Motor neuron (in vitro differentiated cells): ENCODE measurements at regions of chr2 and their contacts with region 1.

Region 1: GRCh38 chr2:162490052-162490717 is 146.3 kb downstream of the GCA start:
- ATAC-seq: peak in 3 of 8 experiments; percentile 57 to 79 (median 64)
- H3K4me3 ChIP-seq: no peak overlapping the region
- H3K27ac ChIP-seq: no peak overlapping the region
- H3K4me1 ChIP-seq: no peaks in the 10 kb centered on the region

Region 2: DNA sequence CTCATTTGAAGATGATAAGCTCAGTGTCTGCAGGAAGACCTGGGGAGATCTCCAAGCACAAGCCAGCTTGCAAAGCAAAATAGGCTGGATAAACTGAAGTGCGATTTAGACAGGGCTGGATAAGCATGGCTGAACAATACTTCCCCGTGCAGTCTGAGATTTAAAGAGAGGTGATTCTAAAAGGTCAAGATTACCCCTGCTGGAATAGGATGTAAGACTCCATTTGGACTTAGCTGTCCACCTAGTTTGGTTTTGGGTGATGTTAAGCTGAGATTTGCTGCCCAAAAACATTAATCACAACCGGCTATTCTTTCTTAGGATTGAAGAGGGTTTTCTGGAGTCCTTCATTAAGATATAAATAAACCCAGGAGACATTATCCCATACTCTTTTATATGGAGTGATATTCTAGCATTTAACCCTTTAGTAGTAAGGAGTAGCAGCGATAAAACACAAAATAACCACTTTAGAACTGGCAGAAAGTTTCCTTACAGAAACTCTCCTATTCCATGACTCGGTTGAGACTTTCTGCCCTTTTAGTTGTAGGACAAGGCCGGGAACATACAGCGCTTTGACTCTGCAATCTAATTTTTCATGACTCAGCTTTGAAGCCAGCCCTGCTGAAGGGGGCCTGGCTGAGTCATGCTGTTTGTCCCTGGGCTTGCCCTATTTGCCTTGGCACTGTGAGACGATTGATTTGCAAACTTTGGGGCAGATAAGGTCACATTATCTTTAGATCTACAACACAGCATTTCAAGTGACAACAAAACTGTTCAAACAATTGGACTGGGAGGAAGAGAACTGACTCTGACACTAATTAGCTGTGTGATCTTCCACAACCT is 92.0 kb after region 1 on chr2:
- in situ Hi-C with region 1: loop called in 1 of 9 experiments (anchors 25 kb)
- ATAC-seq: peak; percentile 33 to 87 (median 64)
- H3K4me3 ChIP-seq: no peak overlapping the region
- H3K27ac ChIP-seq: no peak overlapping the region
- H3K4me1 ChIP-seq: peaks cover 16 to 28% of the 10 kb centered on the region in 2 donors